SK-N-SH (cell line): ENCODE measurements at regions of chr6 and their contacts with region 1.

Region 1: GRCh38 chr6:14066782-14067406 is 50.7 kb upstream of the CD83 start:
- DNase-seq: peak; percentile 67
- H3K4me3 ChIP-seq: peak overlapping the region in 1 of 2 experiments; percentile 12; a peak in 1 of 4 replicates
- H3K27ac ChIP-seq: no peak overlapping the region
- H3K4me1 ChIP-seq: no peaks in the 10 kb centered on the region
- H3K27me3 ChIP-seq: no peaks in the 10 kb centered on the region
- CTCF ChIP-seq: peak; percentile 76
- EP300 ChIP-seq: no peak
- RAD21 ChIP-seq: peak; percentile 94

Region 2: GRCh38 chr6:13873285-13874190 is 193.4 kb before region 1 on chr6:
- CTCF ChIA-PET with region 1: interaction called, 16 read pairs
- POLR2A ChIA-PET with region 1: no interaction called
- DNase-seq: peak; percentile 92
- H3K4me3 ChIP-seq: peak overlapping the region; percentile 38 to 62
- H3K27ac ChIP-seq: no peak overlapping the region
- H3K4me1 ChIP-seq: peaks cover 0 to 10% of the 10 kb centered on the region in 2 experiments; a peak in 1 of 4 replicates
- H3K27me3 ChIP-seq: no peaks in the 10 kb centered on the region
- CTCF ChIP-seq: peak; percentile 71
- EP300 ChIP-seq: no peak
- RAD21 ChIP-seq: peak; percentile 49

Region 3: DNA sequence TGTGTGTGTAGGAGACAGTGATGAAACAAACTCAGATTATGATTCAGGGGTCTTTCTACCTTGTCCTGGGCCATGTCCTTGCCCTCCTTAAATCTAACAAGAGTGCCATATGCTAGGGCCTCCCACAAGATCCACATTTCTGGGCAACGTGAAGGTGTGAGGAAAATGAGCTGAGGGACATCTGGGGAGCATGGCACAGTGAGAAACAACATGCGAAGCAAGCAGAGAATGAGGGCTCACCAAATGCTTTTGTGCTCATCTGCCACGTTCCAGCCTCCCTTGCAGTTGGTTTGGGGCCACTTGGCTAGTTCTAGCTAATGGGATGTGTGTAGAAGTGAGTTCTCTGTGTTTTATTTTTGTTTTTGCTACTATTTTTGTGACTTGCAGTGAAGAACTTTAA is 163.5 kb before region 1 on chr6:
- CTCF ChIA-PET with region 1: interaction called, 155 read pairs
- POLR2A ChIA-PET with region 1: no interaction called
- DNase-seq: no peak
- H3K4me3 ChIP-seq: no peak overlapping the region
- H3K27ac ChIP-seq: no peak overlapping the region
- H3K4me1 ChIP-seq: no peaks in the 10 kb centered on the region
- H3K27me3 ChIP-seq: no peaks in the 10 kb centered on the region
- CTCF ChIP-seq: no peak
- EP300 ChIP-seq: no peak
- RAD21 ChIP-seq: no peak

Region 4: GRCh38 chr6:13924146-13924948 is 142.5 kb before region 1 on chr6:
- CTCF ChIA-PET with region 1: interaction called, 18 read pairs
- POLR2A ChIA-PET with region 1: no interaction called
- DNase-seq: peak; percentile 94
- H3K4me3 ChIP-seq: peak overlapping the region; percentile 66 to 80
- H3K27ac ChIP-seq: peak overlapping the region; percentile 79 to 81
- H3K4me1 ChIP-seq: peaks cover 3 to 11% of the 10 kb centered on the region in 2 experiments; a peak in 1 of 4 replicates
- H3K27me3 ChIP-seq: no peaks in the 10 kb centered on the region
- CTCF ChIP-seq: no peak
- EP300 ChIP-seq: no peak
- RAD21 ChIP-seq: no peak

Region 5: GRCh38 chr6:14046476-14047068 is 20.3 kb before region 1 on chr6:
- CTCF ChIA-PET with region 1: interaction called, 15 read pairs
- POLR2A ChIA-PET with region 1: no interaction called
- DNase-seq: peak; percentile 65
- H3K4me3 ChIP-seq: no peak overlapping the region
- H3K27ac ChIP-seq: no peak overlapping the region
- H3K4me1 ChIP-seq: no peaks in the 10 kb centered on the region
- H3K27me3 ChIP-seq: no peaks in the 10 kb centered on the region
- CTCF ChIP-seq: peak; percentile 73
- EP300 ChIP-seq: no peak
- RAD21 ChIP-seq: peak; percentile 73

Region 6: GRCh38 chr6:14079433-14079832 is 12.5 kb after region 1 on chr6:
- CTCF ChIA-PET with region 1: interaction called, 15 read pairs
- POLR2A ChIA-PET with region 1: no interaction called
- DNase-seq: no peak
- H3K4me3 ChIP-seq: no peak overlapping the region
- H3K27ac ChIP-seq: no peak overlapping the region
- H3K4me1 ChIP-seq: peaks cover 0 to 3% of the 10 kb centered on the region in 2 experiments; a peak in 2 of 4 replicates
- H3K27me3 ChIP-seq: no peaks in the 10 kb centered on the region
- CTCF ChIP-seq: no peak
- EP300 ChIP-seq: no peak
- RAD21 ChIP-seq: no peak